Heart left ventricle (tissue), 16 donors: ENCODE measurements at regions of chr6 and their contacts with region 1.

Region 1: DNA sequence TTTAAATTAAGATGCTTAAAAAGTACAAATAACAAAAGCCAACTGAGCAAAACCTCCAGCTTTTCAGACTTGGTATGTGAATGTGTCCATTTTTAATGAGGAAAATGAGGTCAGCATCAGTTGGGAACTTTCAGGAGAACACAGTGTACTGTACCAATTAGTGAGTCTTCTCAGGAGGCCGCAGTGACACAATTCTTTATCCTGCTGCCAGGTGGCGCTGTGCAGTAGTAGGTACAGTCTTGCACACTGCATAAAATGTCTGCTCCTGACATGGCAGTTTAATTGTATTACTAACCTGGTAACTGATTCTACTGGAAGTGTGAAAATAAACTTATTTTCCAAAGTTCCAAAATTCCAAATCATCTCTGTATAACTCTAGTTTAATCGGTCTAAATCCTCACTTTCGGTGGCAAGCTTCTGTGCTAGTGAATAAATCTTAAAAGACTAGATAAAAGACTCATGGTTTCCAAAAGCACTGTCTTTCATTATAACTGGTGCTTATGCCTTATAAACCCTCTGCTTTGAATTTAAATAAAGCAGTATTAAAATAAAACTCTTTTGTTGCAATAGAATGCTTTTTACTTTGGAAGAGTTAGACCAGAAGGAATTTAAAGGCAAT is 214.8 kb upstream of the MMS22L start:
- DNase-seq: peak; percentile 37 to 68 (median 43)
- ATAC-seq: peak; percentile 84 to 93 (median 90)
- H3K4me3 ChIP-seq: no peak overlapping the region
- H3K27ac ChIP-seq: no peak overlapping the region
- H3K4me1 ChIP-seq: no peaks in the 10 kb centered on the region
- H3K27me3 ChIP-seq: peaks cover 0 to 5% (median 0%) of the 10 kb centered on the region in 9 donors
- CTCF ChIP-seq: peak; percentile 65 to 85 (median 76)
- POLR2A ChIP-seq: no peak

Region 2: DNA sequence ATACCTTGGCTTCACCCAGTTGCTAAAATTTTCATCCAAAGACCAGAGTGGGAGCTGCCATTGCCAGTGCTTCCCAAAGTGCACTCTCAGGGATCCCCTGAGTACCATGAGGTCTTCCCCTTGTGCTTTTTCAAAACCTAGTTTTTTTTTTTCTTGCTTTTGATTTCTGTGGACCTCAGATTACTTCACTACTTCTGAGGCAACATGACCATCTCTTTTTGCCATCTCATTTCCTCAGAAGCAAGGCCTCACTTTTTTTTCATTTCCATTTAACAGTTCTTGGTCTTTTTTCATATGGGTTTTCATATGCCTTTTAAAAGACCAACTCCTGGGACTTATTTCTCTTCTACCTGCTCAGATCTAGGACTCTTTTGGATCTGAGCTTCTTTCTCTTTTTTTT is 150.7 kb before region 1 on chr6:
- intact Hi-C with region 1: no loop called
- DNase-seq: no peak
- ATAC-seq: no peak
- H3K4me3 ChIP-seq: no peak overlapping the region
- H3K27ac ChIP-seq: no peak overlapping the region
- H3K4me1 ChIP-seq: no peaks in the 10 kb centered on the region
- H3K27me3 ChIP-seq: no peaks in the 10 kb centered on the region
- CTCF ChIP-seq: no peak
- POLR2A ChIP-seq: no peak

Region 3: GRCh38 chr6:97925504-97925903 is 427.7 kb after region 1 on chr6:
- intact Hi-C with region 1: loop called in 1 of 10 experiments (anchors 10 kb)
- DNase-seq: no peak
- ATAC-seq: no peak
- H3K4me3 ChIP-seq: no peak overlapping the region
- H3K27ac ChIP-seq: no peak overlapping the region
- H3K4me1 ChIP-seq: no peaks in the 10 kb centered on the region
- H3K27me3 ChIP-seq: no peaks in the 10 kb centered on the region
- CTCF ChIP-seq: no peak
- POLR2A ChIP-seq: no peak

Region 4: DNA sequence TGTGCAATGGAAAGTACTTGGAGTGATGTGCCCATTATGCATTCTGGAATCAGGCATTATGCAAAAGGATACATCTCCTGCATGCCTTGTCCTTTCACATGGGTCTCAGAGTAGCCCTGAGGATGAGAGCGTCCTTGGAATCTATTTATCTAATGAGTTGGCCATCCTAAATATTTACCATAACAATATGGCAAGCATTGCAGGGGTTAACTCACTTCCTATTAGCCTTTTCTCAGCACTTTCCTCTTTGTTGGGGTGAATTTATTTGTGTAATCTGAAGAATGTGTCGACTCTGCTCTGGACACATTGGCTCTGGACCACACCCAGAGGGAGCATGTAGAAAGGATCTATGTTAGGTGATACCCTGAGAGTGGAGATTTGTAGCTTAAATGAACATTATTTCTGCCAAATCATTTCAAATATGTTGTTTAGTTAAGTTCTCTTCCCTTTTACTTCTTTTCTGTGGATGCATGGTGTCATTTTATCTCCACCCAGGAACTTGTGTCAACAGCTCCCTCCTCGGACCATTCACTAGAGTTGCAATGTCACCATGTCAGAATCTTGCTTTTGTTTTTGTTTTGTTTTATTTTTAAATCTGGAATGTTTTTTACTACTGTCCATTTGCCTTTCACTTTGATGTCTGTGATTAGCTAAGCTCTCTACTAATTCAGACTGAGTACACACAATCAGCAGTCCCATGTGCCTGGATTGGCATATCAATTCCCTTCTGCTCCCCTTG is 542.2 kb after region 1 on chr6:
- intact Hi-C with region 1: loop called in 4 of 10 experiments (anchors 2 to 10 kb)
- DNase-seq: no peak
- ATAC-seq: no peak
- H3K4me3 ChIP-seq: no peak overlapping the region
- H3K27ac ChIP-seq: no peak overlapping the region
- H3K4me1 ChIP-seq: no peaks in the 10 kb centered on the region
- H3K27me3 ChIP-seq: peaks cover 0 to 12% (median 0%) of the 10 kb centered on the region in 9 donors
- CTCF ChIP-seq: peak in 7 of 12 donors; percentile 10 to 48 (median 36)
- POLR2A ChIP-seq: no peak

Region 5: DNA sequence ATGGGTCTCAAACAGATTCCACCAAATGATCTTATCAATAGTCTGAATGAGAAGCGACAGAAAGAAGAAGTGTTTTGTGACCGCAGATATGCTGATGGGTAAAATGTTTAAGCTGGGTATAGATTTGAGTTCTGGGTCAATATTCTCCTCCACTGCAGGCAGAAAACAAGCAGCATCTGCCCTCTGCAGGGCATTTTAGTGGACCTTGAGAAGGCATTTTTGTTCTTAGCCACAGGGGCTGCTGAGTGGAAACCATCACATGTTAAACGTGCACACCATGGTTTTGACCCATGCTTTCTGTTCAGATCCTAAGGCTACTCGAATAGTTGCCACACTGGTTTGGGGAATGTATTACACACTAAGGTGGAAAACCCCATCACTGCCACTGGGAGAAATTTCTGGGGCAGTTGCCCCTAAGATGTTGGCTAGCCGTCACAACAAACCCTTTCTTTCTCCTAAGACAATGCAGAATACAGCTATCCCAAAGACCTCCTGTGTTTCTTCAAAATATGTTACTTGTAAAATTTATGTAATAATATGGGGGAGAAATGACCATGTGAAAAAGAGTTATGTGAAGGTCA is 1342.0 kb after region 1 on chr6:
- intact Hi-C with region 1: loop called in 7 of 10 experiments (anchors 5 to 10 kb)
- DNase-seq: no peak
- ATAC-seq: no peak
- H3K4me3 ChIP-seq: no peak overlapping the region
- H3K27ac ChIP-seq: no peak overlapping the region
- H3K4me1 ChIP-seq: peaks cover 2 to 36% (median 17%) of the 10 kb centered on the region in 12 donors
- H3K27me3 ChIP-seq: peaks cover 77 to 100% (median 99%) of the 10 kb centered on the region in 9 donors
- CTCF ChIP-seq: no peak
- POLR2A ChIP-seq: no peak

Region 6: GRCh38 chr6:98845211-98846020 is 1347.6 kb after region 1 on chr6:
- intact Hi-C with region 1: loop called in 7 of 10 experiments (anchors 5 to 10 kb)
- DNase-seq: peak; percentile 63 to 81 (median 72)
- ATAC-seq: peak; percentile 24 to 84 (median 74)
- H3K4me3 ChIP-seq: peak overlapping the region in 9 of 12 donors; percentile 1 to 40 (median 34)
- H3K27ac ChIP-seq: no peak overlapping the region
- H3K4me1 ChIP-seq: peaks cover 0 to 43% (median 22%) of the 10 kb centered on the region in 12 donors
- H3K27me3 ChIP-seq: peaks cover 37 to 99% (median 81%) of the 10 kb centered on the region in 9 donors
- CTCF ChIP-seq: peak; percentile 62 to 81 (median 76)
- POLR2A ChIP-seq: no peak

Region 7: DNA sequence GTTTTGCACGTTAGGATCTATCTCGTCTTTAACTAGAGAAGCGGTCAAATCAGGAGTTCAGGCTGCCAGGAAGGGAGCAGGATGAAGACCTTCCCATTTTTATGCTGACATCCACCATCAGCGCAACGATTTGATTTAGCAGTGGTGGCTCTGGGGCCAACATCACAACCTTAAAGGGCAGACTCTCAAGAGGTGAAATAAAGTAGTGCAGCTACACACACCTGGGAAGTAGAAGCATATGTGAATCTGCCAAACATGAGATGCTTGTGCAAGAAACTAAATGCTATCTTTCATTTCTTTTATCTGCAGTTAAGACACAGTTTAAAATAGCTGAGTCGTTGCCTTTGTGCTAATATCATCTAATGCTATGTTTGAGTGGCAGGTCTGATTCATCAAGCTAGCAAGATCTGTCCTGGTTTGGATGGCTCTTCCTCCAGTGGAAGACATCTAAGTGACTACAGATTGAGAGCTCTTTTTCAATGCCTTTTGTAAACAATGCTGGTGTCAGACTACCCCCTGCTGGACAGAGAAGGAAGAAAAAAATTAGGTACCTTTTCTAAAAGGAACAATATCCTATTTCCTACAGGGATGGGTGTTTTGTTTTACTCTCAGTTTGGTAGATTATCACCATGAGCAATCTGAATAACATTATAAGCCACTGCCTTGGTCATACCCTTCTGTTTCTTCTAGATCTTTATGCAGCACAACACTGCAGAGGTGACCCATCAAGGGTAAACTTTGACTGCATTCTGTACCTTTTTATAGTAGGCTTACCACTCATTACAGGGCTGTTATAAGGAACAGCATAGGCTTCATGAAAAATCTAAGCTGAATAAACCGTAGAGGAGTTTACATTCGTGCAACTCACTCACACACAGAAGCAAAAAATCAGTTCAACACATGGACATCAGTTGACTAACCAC is 1621.5 kb after region 1 on chr6:
- intact Hi-C with region 1: loop called in 5 of 10 experiments (anchors 5 to 10 kb)
- DNase-seq: no peak
- ATAC-seq: peak in 2 of 4 donors; percentile 42 to 45
- H3K4me3 ChIP-seq: no peak overlapping the region
- H3K27ac ChIP-seq: no peak overlapping the region
- H3K4me1 ChIP-seq: no peaks in the 10 kb centered on the region
- H3K27me3 ChIP-seq: peaks cover 0 to 34% (median 0%) of the 10 kb centered on the region in 9 donors
- CTCF ChIP-seq: peak; percentile 43 to 74 (median 59)
- POLR2A ChIP-seq: no peak